ENCODE measurements at regions of chr10 and their contacts with region 1.

Region 1: DNA sequence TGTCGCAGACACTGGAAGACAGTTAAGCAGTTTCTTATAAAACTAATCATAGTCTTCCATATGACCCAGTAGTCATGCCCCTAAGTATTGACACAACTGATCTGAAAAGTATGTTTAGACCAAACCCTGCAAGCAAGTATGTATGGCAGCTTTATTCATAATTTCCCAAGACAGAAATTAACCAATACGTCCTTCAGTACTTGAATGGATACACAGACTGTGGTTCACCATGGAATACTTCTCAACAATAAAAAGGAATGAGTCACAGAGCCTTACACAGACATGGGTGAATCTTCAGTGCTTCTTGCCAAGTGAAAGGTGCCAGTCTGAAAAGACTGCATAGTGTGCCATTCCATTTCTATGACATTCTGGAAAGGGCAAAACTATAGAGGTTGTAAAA is 50.2 kb upstream of the AKR1E2 start:
- ATAC-seq: peak in 1 of 8 experiments; percentile 46
- H3K4me3 ChIP-seq: no peak overlapping the region
- H3K27ac ChIP-seq: no peak overlapping the region
- H3K4me1 ChIP-seq: peaks cover 0 to 4% of the 10 kb centered on the region in 2 donors

Region 2: GRCh38 chr10:3197348-3198003 is 1578.3 kb before region 1 on chr10:
- in situ Hi-C with region 1: loop called in 8 of 9 experiments (anchors 10 to 25 kb)
- ATAC-seq: peak; percentile 87 to 97 (median 96)
- H3K4me3 ChIP-seq: no peak overlapping the region
- H3K27ac ChIP-seq: no peak overlapping the region
- H3K4me1 ChIP-seq: peaks cover 15% of the 10 kb centered on the region in 2 donors

Region 3: DNA sequence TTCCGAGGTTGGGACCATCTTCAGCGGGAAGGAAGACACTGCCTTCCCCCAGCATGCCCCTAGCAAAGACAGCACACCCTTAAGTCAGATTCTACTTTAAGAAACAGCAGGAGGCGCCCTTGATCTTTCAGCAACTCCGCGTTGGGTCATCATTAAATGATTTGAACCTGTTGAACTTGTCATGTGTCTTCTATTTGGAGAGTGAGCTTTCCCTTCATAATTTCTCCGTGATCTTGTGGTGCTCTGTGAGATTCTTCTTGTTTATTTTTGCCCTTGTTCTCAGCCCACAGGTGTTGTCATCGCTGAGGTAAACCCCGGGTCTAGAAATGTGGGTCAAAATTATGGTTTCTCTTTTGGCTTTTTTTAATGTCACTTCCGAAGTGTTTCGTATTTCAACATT is 1553.7 kb before region 1 on chr10:
- in situ Hi-C with region 1: loop called in 5 of 9 experiments (anchors 25 kb)
- ATAC-seq: peak in 2 of 8 experiments; percentile 65 to 79
- H3K4me3 ChIP-seq: no peak overlapping the region
- H3K27ac ChIP-seq: no peak overlapping the region
- H3K4me1 ChIP-seq: peaks cover 3 to 4% of the 10 kb centered on the region in 2 donors

Region 4: DNA sequence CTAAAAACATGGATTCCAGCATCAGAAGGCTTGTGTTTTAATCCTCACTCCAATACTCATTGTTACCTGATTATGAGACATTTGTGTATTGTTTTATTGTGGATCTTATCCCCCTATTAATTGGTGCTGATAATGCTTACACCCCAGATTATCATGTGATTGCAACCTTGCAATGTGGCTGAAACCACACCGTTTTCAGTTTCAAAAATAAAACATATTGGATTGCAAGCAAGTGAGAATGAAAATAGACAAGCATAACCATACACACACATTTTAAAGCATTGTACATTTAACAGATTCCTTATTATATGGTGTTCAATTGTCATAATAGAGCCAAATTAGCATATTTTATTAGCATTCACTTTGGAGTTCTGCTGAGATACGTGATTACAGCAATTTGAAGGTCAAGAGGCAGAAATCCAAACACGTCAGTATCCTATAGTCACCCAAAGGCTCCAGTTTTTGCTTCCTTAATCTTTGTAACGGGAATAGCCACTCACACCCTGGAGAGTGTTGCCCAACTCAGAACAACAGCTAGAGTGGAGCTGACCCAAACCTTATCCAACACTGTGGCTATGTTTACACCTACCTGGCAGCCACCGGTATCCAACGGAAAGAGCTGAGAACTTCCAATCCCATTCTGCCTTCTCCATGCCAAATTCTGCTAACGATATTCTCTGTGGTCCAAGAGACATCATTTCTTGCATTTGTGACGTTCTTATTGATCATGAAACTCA is 673.7 kb before region 1 on chr10:
- in situ Hi-C with region 1: no loop called
- ATAC-seq: no peak
- H3K4me3 ChIP-seq: no peak overlapping the region
- H3K27ac ChIP-seq: no peak overlapping the region
- H3K4me1 ChIP-seq: no peaks in the 10 kb centered on the region

Region 5: DNA sequence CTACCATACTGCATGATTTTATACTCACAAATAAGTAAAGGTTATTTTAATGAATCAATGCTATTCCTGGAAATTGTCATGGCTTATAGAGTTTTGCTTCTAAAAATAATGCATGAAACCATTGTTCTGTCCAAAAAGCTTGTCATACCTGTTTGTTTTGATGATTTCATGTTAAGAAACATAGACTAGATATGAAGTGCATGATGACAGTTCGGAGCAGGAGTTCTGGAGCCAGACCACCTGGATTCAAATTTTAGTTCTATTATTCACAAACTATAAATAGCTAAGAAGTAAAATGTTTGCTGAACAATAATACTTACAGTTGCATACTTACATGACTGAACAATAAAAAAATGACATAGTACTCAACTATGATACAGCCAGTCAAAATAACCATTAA is 56.8 kb before region 1 on chr10:
- in situ Hi-C with region 1: no loop called
- ATAC-seq: no peak
- H3K4me3 ChIP-seq: no peak overlapping the region
- H3K27ac ChIP-seq: no peak overlapping the region
- H3K4me1 ChIP-seq: no peaks in the 10 kb centered on the region